Activated CD8-positive, alpha-beta memory T cell treated with anti-CD3 and anti-CD28 coated beads, Interleukin-2, amount 10 ng/mL, durations not matched to agents 7 days and 5 days (primary cell): ENCODE measurements at regions of chr11 and their contacts with region 1.

Region 1: GRCh38 chr11:133947321-133947756 is 9.4 kb downstream of the IGSF9B start:
- DNase-seq: peak; percentile 83
- ATAC-seq: peak; percentile 58
- H3K4me3 Mint-ChIP-seq: peak overlapping the region; percentile 56
- H3K27ac Mint-ChIP-seq: peak overlapping the region; percentile 74
- H3K4me1 Mint-ChIP-seq: peaks cover 72% of the 10 kb centered on the region
- H3K27me3 Mint-ChIP-seq: no peaks in the 10 kb centered on the region

Region 2: GRCh38 chr11:133937015-133937414 is 10.3 kb before region 1 on chr11:
- CTCF ChIA-PET with region 1: interaction called, 10 read pairs
- DNase-seq: no peak
- ATAC-seq: no peak
- H3K4me3 Mint-ChIP-seq: no peak overlapping the region
- H3K27ac Mint-ChIP-seq: no peak overlapping the region
- H3K4me1 Mint-ChIP-seq: peaks cover 3% of the 10 kb centered on the region
- H3K27me3 Mint-ChIP-seq: no peaks in the 10 kb centered on the region

Region 3: GRCh38 chr11:134033696-134034491 is 86.6 kb after region 1 on chr11:
- CTCF ChIA-PET with region 1: interaction called, 13 read pairs
- DNase-seq: peak; percentile 85
- ATAC-seq: peak; percentile 90
- H3K4me3 Mint-ChIP-seq: peak overlapping the region; percentile 23
- H3K27ac Mint-ChIP-seq: peak overlapping the region; percentile 58
- H3K4me1 Mint-ChIP-seq: peaks cover 50% of the 10 kb centered on the region
- H3K27me3 Mint-ChIP-seq: peaks cover 5% of the 10 kb centered on the region